Activated CD4-positive, alpha-beta T cell treated with anti-CD3 and anti-CD28 coated beads for 36 hours (primary cell): ENCODE measurements at regions of chr1 and their contacts with region 1.

Region 1: DNA sequence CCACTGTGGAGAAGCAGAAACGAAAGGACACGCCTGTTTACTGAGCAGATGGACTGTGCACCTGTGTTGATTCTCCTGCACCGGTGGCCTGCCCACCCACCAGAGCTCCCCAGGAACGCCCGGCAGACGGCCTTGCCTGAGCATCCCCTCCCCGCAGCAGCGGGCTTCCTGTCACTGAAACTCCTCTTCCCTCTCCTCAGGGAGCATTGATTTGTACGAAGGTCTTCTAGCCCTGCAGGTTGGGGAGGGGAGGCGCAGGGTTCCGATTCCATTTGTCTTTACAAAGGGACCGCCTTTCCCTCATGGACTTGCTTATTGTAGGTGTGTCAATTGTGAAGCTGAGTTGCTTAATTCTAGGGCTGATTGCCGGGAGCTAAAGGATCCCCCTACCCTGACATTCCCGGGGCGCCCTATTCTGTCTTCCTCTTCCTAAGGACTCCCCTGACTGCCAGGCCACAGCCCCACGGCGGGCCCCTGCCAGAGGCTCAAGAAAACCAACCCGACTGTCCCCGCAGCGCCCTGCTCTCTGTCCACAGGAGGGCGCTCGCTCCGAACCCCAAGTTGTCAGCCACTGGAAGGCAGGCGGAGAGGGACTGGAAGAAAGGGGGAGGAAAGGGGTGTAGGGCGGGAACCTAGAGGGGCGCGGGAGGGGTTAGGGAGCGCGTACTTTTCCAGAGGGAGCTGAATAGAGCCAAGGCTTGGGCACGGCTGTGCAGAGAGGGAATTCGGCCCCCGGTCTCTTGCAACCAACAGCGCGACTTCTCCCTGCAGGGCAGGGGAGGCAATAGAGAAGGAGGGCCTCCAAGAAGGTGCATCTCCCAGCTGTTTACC is 2.8 kb downstream of the S100A6 start:
- DNase-seq: peak; percentile 91
- ATAC-seq: peak; percentile 31
- H3K4me3 Mint-ChIP-seq: peak overlapping the region; percentile 89
- H3K27ac Mint-ChIP-seq: peak overlapping the region; percentile 94
- H3K4me1 Mint-ChIP-seq: peaks cover 58% of the 10 kb centered on the region
- H3K27me3 Mint-ChIP-seq: no peaks in the 10 kb centered on the region

Region 2: DNA sequence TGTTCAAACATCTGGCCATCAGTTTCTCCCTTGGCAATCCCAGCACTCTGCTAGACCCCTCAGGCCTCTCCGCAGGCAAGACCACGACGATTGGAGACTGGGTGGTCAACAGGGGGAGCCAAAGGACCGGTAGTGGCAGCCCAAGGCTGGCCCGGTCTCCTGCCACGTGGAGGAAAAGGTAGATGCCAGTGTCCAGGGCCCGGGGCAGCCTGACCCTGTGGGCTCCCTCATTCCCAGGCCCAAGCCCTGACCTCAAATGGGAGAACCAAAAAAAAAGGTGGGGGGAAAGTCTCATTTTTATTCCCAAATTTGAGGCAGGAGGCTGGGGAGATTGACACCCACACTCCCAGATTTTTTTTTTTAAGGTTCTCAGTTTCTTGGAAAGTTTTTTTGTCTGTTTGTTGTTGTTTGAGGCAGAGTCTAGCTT is 22.0 kb before region 1 on chr1:
- CTCF ChIA-PET with region 1: interaction called, 27 read pairs
- POLR2A ChIA-PET with region 1: interaction called, 3 read pairs
- intact Hi-C with region 1: loop called in 1 of 2 experiments (anchors 1 kb)
- DNase-seq: peak; percentile 90
- ATAC-seq: peak; percentile 95
- H3K4me3 Mint-ChIP-seq: no peak overlapping the region
- H3K27ac Mint-ChIP-seq: peak overlapping the region; percentile 74
- H3K4me1 Mint-ChIP-seq: peaks cover 10% of the 10 kb centered on the region
- H3K27me3 Mint-ChIP-seq: no peaks in the 10 kb centered on the region

Region 3: GRCh38 chr1:153566440-153567379 is 33.7 kb after region 1 on chr1:
- CTCF ChIA-PET with region 1: interaction called, 97 read pairs
- POLR2A ChIA-PET with region 1: interaction called, 13 read pairs
- intact Hi-C with region 1: loop called (anchors 1 kb)
- DNase-seq: peak; percentile 95
- ATAC-seq: peak; percentile 84
- H3K4me3 Mint-ChIP-seq: peak overlapping the region; percentile 71
- H3K27ac Mint-ChIP-seq: peak overlapping the region; percentile 100
- H3K4me1 Mint-ChIP-seq: peaks cover 52% of the 10 kb centered on the region
- H3K27me3 Mint-ChIP-seq: no peaks in the 10 kb centered on the region

Region 4: GRCh38 chr1:153658400-153659174 is 125.6 kb after region 1 on chr1 and contains the start of gene SNAPIN:
- CTCF ChIA-PET with region 1: interaction called, 4 read pairs
- POLR2A ChIA-PET with region 1: interaction called, 3 read pairs
- intact Hi-C with region 1: loop called in 1 of 2 experiments (anchors 2 kb)
- DNase-seq: peak; percentile 96
- ATAC-seq: peak; percentile 96
- H3K4me3 Mint-ChIP-seq: peak within 1 kb of the TSS; percentile 95
- H3K27ac Mint-ChIP-seq: peak within 1 kb of the TSS; percentile 90
- H3K4me1 Mint-ChIP-seq: peaks cover 13% of the 10 kb centered on the region
- H3K27me3 Mint-ChIP-seq: no peaks in the 10 kb centered on the region
- total RNA-seq, gene SNAPIN: 34.2 to 38.4 TPM

Region 5: GRCh38 chr1:153763365-153764225 is 230.6 kb after region 1 on chr1:
- CTCF ChIA-PET with region 1: no interaction called
- POLR2A ChIA-PET with region 1: no interaction called
- intact Hi-C with region 1: no loop called
- DNase-seq: no peak
- ATAC-seq: no peak
- H3K4me3 Mint-ChIP-seq: no peak overlapping the region
- H3K27ac Mint-ChIP-seq: no peak overlapping the region
- H3K4me1 Mint-ChIP-seq: no peaks in the 10 kb centered on the region
- H3K27me3 Mint-ChIP-seq: no peaks in the 10 kb centered on the region

Region 6: DNA sequence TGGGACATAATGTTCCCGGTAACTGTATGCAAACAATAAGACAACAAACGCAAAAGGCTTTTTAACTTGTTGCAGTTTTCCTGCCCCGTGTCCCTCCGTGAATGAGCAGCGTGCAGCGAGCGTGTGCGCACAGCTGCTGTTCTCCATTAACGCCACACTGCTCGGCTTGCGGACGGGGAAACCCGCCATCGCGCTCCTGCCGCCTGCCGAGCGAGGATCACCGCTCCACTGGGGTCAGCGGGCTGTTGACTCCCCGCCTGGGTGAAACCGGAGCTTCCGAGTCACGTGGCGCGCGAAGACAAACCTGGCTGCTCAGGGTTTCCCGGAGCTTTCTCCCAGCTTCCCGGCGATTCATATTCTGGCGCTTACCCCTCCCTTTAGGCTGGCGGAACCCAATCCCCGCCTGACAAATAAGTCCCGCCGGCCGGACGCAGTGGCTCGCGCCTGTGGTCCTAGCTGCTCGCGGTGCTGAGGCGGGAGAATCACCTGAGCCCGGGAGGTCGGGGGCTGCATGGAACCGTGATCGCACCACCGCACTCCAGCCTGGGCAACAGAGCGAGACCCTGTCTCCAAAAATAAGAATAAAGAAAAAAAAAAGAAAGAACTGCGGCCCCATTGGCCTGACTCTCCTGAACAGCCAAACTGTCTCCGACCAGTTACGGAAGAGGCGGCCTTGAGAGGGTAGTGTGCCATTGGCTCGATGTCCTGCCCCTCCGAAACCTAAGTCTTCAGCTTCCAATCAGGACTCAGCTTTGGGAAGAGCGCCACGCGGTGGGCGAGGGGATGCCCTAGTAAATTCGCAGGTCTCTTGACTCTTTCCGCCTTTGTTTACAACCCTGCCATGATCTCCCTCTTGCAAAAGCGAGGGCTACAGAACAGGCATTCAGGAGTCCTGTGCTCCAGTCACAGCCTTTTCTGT is 434.4 kb after region 1 on chr1 and contains the start of gene CREB3L4:
- CTCF ChIA-PET with region 1: no interaction called
- POLR2A ChIA-PET with region 1: no interaction called
- intact Hi-C with region 1: loop called (anchors 10 kb)
- DNase-seq: peak; percentile 91
- ATAC-seq: peak; percentile 87
- H3K4me3 Mint-ChIP-seq: peak within 1 kb of the TSS; percentile 96
- H3K27ac Mint-ChIP-seq: peak within 1 kb of the TSS; percentile 96
- H3K4me1 Mint-ChIP-seq: peaks cover 38% of the 10 kb centered on the region
- H3K27me3 Mint-ChIP-seq: no peaks in the 10 kb centered on the region
- total RNA-seq, gene CREB3L4: 8.5 to 9.1 TPM

Region 7: GRCh38 chr1:154863315-154864174 is 1330.6 kb after region 1 on chr1:
- CTCF ChIA-PET with region 1: no interaction called
- POLR2A ChIA-PET with region 1: no interaction called
- intact Hi-C with region 1: no loop called
- DNase-seq: peak; percentile 61
- ATAC-seq: peak; percentile 74
- H3K4me3 Mint-ChIP-seq: no peak overlapping the region
- H3K27ac Mint-ChIP-seq: peak overlapping the region; percentile 45
- H3K4me1 Mint-ChIP-seq: peaks cover 36% of the 10 kb centered on the region
- H3K27me3 Mint-ChIP-seq: peaks cover 17% of the 10 kb centered on the region